Transverse colon (tissue), 4 donors: ENCODE measurements at regions of chr13 and their contacts with region 1.

Region 1: GRCh38 chr13:30362869-30363268 is 55.5 kb upstream of the KATNAL1 start:
- DNase-seq: no peak
- H3K4me3 ChIP-seq: no peak overlapping the region
- H3K27ac ChIP-seq: peak overlapping the region in 1 of 4 donors; percentile 18
- H3K4me1 ChIP-seq: no peaks in the 10 kb centered on the region
- H3K27me3 ChIP-seq: no peaks in the 10 kb centered on the region
- CTCF ChIP-seq: no peak
- EP300 ChIP-seq: no peak
- POLR2A ChIP-seq: no peak

Region 2: DNA sequence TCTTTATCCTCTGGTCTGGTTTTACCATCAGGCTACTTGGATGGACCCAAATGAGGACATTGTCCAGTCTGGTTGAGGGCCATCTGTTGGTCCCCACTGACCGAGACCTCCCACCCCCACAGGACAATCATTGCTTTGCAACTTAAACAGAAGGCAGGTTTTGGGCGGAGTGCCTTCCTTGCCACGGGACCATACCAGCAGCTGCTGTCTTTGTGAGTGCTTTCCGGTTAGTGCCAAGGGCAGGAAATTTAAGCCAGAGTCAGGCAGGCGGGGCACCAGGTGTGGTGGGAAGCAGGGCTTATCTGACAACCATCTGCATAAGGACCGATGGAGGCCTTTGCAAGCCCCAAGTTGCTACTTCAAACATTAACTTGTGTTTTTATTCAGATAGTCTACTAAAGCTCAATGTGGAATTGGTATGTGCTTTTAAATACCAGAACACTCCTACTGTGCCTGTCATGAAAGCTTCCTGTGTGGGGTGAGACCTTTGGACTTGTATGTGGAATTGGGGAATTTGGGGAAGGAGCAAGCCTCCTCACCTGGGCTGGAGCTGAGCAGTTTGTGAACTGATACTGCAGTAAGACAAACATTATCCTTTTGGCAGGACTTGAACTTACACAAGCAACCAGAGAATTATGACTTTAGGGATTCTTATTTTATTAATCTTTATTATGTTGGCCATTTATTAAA is 20.1 kb after region 1 on chr13:
- in situ Hi-C with region 1: no loop called
- intact Hi-C with region 1: loop called (anchors 2 kb)
- DNase-seq: peak; percentile 25
- H3K4me3 ChIP-seq: no peak overlapping the region
- H3K27ac ChIP-seq: peak overlapping the region in 1 of 4 donors; percentile 11
- H3K4me1 ChIP-seq: peaks cover 0 to 11% (median 0%) of the 10 kb centered on the region in 4 donors
- H3K27me3 ChIP-seq: no peaks in the 10 kb centered on the region
- CTCF ChIP-seq: no peak
- EP300 ChIP-seq: no peak
- POLR2A ChIP-seq: no peak